Posterior cingulate gyrus (tissue), 11 donors: ENCODE measurements at regions of chr17 and their contacts with region 1.

Region 1: DNA sequence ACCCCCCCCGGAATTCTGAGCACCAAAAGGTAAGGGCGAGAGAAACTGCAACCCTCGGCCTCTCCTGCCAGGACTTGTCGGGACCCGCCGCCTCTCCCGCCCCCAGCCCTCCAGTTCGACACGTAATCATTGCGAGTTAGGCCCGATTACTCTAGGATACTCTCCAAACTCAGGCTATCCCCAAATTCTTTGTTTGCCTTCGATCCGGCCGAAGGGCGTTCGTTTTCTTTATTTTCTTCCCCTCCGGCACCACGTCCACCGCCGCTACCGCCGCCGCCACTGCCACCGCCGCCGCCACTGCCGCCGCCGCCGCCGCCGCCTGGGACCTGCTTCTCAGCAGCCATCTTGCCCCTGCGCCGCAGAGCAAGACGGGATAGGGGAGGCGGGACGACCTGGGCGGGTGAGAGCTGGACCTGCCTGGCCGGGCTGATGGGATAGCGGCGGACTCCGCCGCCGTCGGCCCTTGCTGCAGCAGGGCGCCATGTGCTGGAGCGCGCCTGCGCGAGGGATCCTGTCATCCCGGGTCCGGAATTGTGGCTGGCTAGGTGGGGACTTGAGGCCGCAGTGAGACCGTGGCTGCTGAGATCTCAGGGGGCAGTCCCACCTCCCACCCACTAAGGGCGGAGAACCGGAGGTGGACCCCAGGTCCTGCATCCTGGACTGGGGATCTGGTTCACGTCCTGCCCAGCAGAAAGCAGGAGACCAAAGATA is at the start of gene SRP68:
- DNase-seq: peak; percentile 95 to 100 (median 97)

Region 2: DNA sequence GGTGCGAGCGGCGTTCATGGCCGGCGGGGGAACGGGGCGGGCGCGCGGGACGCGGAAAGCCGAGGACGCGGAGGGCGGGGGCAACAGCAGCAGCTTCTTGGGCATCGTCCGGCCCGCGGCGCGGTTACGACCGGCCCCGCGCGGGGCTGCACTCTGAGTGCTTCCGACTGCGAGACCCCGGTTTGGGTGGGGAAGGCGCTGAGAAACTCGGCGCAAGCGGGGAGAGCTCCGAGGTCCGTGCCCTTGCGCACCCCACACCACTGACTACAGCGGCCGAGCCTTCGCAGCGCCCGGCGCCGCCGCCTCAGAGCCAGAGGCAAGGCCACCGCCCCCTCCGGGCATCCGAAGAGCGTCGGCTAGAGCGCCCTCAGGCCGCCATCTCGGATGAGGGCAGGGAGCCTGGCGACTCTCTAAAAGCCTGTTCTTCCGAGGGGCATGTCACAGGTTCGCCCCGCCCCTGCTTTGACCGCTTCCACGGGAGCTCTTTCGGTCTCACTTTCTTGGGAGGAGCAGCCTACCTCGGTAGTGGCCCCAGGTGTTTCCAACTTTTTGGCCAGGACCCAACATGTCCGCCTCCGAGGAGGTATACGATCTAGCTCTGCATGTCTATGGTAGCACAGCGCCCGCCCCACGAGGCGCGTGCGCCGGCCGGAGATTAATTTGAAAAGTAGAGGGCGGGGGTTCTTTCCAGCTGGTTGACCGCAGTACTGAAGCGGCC is 281.5 kb after region 1 on chr17 and contains the start of gene PRPSAP1:
- intact Hi-C with region 1: loop called (anchors 1 kb)
- DNase-seq: peak; percentile 79 to 98 (median 86)